ENCODE measurements at regions of chr16 and their contacts with region 1.

Region 1: GRCh38 chr16:84726079-84726668 is 26.4 kb downstream of the USP10 start:
- DNase-seq: no peak
- H3K4me3 ChIP-seq: no peak overlapping the region
- CTCF ChIP-seq: peak; percentile 88

Region 2: GRCh38 chr16:84511180-84511824 is 214.9 kb before region 1 on chr16:
- CTCF ChIA-PET with region 1: interaction called, 34 read pairs
- POLR2A ChIA-PET with region 1: no interaction called
- DNase-seq: peak; percentile 36
- H3K4me3 ChIP-seq: no peak overlapping the region
- CTCF ChIP-seq: peak; percentile 85

Region 3: DNA sequence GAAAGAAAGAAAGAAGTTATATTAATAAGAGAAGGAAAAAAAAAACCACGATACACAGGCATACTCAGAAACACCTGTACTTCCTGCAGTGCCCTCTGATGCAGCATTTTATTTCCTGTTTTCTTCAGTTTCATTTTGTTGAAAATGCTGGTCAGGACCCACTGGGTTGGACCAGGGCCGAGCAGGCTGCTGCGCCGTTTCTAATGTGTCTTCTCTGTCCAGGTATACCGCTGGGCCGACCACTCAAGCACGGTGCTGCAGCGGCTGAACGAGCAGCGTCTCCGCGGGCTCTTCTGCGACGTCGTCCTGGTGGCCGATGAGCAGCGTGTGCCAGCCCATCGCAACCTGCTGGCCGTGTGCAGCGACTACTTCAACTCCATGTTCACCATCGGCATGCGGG is 69.5 kb before region 1 on chr16:
- CTCF ChIA-PET with region 1: interaction called, 665 read pairs
- POLR2A ChIA-PET with region 1: no interaction called
- DNase-seq: no peak
- H3K4me3 ChIP-seq: no peak overlapping the region
- CTCF ChIP-seq: no peak

Region 4: DNA sequence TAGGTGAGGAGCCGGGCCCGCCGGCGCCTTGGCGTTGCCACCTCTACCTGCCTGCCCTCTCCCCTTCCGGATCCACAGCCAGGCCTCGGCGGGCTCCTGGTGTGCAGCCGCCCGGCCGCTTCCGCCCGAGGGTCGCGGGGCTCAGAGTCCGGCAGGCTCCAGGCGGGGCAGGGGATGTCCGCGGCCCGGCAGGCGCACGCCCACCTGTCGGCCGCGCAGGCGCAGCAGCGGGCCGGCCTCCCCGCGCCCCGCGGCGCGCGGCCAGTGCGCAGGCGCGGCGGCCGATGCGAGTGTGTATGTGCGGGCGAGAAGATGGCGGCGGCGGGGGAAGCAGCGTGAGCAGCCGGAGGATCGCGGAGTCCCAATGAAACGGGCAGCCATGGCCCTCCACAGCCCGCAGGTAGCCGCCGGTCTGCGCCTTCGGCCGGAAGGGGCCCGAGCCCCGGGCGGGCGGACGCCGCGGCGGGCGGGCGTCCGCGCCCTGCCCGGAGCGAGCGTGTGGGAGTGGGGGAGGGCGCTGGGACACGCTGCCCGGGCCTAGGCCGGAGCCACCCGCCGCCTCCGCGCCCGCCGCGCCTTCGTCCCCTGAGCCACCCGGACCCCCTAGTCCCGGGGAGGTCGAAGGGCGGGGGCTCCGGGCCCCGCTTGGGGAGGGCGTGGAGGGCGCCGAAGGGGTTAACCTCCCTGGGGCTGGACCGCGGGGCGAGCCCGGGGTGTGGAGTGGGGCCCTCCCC is 26.3 kb before region 1 on chr16 and contains the start of gene USP10:
- CTCF ChIA-PET with region 1: interaction called, 63 read pairs
- POLR2A ChIA-PET with region 1: no interaction called
- DNase-seq: no peak
- H3K4me3 ChIP-seq: peak within 1 kb of the TSS; percentile 77
- CTCF ChIP-seq: no peak

Region 5: DNA sequence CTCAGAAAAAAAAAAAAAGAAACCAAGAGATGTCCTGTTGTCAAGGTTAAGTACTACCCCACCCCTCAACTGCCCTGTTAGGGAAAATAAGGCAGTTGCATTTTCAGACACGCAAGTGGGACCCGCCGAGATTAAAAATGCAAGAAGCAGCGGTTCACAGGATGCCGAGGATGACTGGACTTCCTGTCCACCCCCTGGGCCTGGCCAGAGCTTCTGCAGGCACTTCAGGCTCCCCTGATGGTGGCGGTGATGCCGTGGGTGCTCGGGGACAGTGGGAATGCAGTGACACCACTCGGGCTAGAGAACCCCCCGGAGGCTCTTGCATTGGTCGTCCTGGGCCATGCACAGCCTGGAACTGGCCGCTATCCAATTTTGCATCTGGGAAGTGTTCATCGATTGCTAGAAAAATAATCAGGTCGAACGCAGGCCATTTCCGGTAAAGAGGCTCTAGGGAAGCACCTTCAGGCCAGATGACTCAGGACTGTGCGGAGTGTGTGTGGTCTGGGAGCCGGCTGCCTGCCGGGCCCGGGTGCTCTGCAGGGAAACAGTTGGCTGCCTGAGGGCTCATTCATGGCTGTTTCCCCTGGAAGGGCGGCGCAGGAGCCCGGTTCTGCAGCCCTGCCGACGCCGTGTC is 80.2 kb after region 1 on chr16:
- CTCF ChIA-PET with region 1: no interaction called
- POLR2A ChIA-PET with region 1: no interaction called
- DNase-seq: peak; percentile 42
- H3K4me3 ChIP-seq: peak overlapping the region; percentile 32
- CTCF ChIP-seq: no peak

Measured in AG04449 (cell line).